Left colon (tissue), 2 donors: ENCODE measurements at regions of chr15 and their contacts with region 1.

Region 1: GRCh38 chr15:60507596-60508424 is 28.9 kb upstream of the ICE2 start:
- DNase-seq: peak in 1 of 2 donors; percentile 21
- ATAC-seq: peak; percentile 84

Region 2: GRCh38 chr15:61834076-61834697 is 1326.4 kb after region 1 on chr15:
- intact Hi-C with region 1: loop called in 1 of 2 experiments (anchors 10 kb)
- DNase-seq: peak; percentile 41 to 83
- ATAC-seq: peak; percentile 85